Activated naive CD4-positive, alpha-beta T cell treated with anti-CD3 and anti-CD28 coated beads for 36 hours (primary cell): ENCODE measurements at regions of chr14 and their contacts with region 1.

Region 1: GRCh38 chr14:81170104-81170828 is 50.5 kb downstream of the GTF2A1 start:
- DNase-seq: peak; percentile 90
- H3K4me3 Mint-ChIP-seq: peak overlapping the region; percentile 85
- H3K27ac Mint-ChIP-seq: peak overlapping the region; percentile 93
- H3K4me1 Mint-ChIP-seq: peaks cover 12% of the 10 kb centered on the region
- H3K27me3 Mint-ChIP-seq: no peaks in the 10 kb centered on the region

Region 2: DNA sequence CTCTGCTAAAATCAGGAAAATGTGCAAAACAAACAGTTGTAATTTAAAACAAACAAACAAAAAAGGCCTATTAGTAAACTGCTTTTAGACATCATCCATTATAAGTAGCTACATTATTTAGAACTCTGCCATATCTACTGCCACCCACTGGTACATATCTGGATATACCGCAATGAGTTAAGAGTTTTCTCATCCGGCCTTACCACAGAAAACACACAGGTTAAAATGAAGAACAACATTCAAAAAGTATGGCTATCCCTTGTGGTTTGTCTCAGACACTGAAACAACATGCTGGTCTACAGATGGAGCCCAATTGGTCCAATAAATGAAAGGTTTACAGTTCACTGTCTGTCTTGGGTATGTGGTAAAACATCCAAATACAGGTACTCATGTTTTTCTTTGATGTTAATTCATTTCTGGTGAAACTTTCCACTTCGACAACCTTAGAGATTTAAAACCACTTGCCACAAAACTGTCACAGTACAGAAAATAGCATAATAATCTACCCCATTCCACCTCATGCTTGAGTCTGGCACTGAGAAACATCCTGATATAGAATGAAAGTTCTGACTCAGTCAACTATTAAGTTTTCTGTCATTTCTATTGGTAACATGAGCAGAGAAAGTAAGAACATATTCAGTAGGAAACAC is 583.1 kb before region 1 on chr14:
- CTCF ChIA-PET with region 1: no interaction called
- intact Hi-C with region 1: loop called (anchors 5 kb)
- DNase-seq: peak; percentile 9
- H3K4me3 Mint-ChIP-seq: no peak overlapping the region
- H3K27ac Mint-ChIP-seq: peak overlapping the region; percentile 39
- H3K4me1 Mint-ChIP-seq: peaks cover 14% of the 10 kb centered on the region
- H3K27me3 Mint-ChIP-seq: no peaks in the 10 kb centered on the region

Region 3: DNA sequence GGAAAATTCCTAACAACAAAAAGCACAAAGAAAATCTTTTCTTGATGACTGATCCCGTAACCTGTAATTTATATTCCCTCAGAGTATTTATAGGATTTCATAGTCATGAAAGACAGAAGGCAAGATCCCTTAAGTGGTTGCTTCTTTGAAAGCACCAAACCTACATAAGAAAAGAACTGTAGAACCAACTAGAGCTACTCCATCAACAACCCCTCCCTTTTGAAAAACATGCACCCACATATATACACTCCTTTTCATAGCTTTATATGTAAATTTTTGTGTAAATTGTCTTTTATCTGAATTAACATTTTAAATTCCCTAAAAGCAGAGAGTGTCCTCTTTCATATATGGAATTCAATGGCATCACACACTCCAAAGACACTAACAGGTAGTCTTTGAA is 444.1 kb before region 1 on chr14:
- CTCF ChIA-PET with region 1: no interaction called
- intact Hi-C with region 1: no loop called
- DNase-seq: no peak
- H3K4me3 Mint-ChIP-seq: no peak overlapping the region
- H3K27ac Mint-ChIP-seq: no peak overlapping the region
- H3K4me1 Mint-ChIP-seq: no peaks in the 10 kb centered on the region
- H3K27me3 Mint-ChIP-seq: no peaks in the 10 kb centered on the region

Region 4: GRCh38 chr14:80941241-80942182 is 228.8 kb before region 1 on chr14 and contains the start of gene CEP128:
- CTCF ChIA-PET with region 1: no interaction called
- intact Hi-C with region 1: loop called (anchors 1 kb)
- DNase-seq: peak; percentile 90
- H3K4me3 Mint-ChIP-seq: peak within 1 kb of the TSS; percentile 86
- H3K27ac Mint-ChIP-seq: peak within 1 kb of the TSS; percentile 88
- H3K4me1 Mint-ChIP-seq: peaks cover 38% of the 10 kb centered on the region
- H3K27me3 Mint-ChIP-seq: no peaks in the 10 kb centered on the region
- total RNA-seq, gene CEP128: 16.4 to 17.1 TPM

Region 5: DNA sequence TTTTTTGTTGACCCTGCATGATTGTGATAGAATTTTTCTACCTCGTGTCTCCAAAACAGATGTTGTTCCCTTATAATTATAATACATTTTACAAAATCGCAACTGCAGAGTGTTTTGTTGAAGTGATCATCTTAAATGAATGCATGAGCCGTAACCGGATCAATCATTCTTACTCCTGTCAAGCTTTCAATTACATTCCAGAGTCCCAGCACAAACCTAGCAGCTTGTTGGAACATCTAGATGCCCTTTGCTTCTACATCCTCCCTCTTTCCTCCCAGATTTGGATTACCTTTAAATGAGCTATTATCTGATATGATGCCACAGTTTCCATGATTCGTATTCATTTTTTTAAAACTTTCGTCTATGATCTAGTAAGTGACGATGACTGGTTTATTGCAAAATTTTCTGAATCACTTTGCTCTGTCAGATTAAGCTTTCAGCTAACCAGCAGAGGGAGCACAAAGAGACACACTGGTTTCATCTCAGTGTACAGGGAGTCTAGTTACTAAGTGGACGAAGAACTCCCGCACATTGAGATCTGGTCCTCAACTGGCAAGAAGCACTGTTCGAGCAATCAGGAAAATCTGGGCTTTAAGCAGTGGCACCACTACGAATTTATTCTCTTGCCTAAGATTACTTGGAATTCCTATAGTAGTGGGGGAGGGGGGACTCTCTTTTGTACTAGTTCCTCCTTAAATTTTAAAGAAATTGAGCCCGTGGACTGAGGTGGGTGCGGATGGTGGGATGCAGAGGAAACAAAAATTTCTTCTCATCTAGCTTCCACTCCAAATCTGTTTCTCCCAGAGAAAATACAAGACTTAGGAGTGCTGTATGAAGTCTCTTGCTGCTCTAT is 174.0 kb before region 1 on chr14:
- CTCF ChIA-PET with region 1: interaction called, 39 read pairs
- intact Hi-C with region 1: loop called (anchors 1 kb)
- DNase-seq: peak; percentile 38
- H3K4me3 Mint-ChIP-seq: no peak overlapping the region
- H3K27ac Mint-ChIP-seq: no peak overlapping the region
- H3K4me1 Mint-ChIP-seq: peaks cover 7% of the 10 kb centered on the region
- H3K27me3 Mint-ChIP-seq: peaks cover 14% of the 10 kb centered on the region

Region 6: GRCh38 chr14:81192594-81192993 is 22.3 kb after region 1 on chr14:
- CTCF ChIA-PET with region 1: interaction called, 7 read pairs
- intact Hi-C with region 1: loop called (anchors 1 kb)
- DNase-seq: peak; percentile 54
- H3K4me3 Mint-ChIP-seq: peak overlapping the region; percentile 59
- H3K27ac Mint-ChIP-seq: peak overlapping the region; percentile 87
- H3K4me1 Mint-ChIP-seq: peaks cover 51% of the 10 kb centered on the region
- H3K27me3 Mint-ChIP-seq: no peaks in the 10 kb centered on the region

Region 7: DNA sequence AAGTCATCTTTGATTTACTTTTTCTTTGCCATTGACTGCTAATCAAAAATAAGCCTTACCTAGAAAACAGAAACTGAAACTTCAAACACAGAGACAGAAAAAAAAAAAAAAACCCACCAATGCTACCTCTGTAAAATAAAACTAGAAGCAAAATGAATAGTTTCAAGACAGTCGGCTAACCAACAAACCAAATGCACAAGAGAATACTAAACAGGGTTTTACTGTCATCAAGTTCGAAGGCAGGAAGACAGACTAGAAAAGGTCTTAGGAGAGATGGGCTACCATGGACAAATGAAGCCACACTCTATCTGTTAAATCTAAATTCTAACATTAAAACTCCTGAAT is 303.9 kb after region 1 on chr14:
- CTCF ChIA-PET with region 1: no interaction called
- intact Hi-C with region 1: loop called (anchors 1 kb)
- DNase-seq: no peak
- H3K4me3 Mint-ChIP-seq: peak overlapping the region; percentile 55
- H3K27ac Mint-ChIP-seq: peak overlapping the region; percentile 92
- H3K4me1 Mint-ChIP-seq: peaks cover 60% of the 10 kb centered on the region
- H3K27me3 Mint-ChIP-seq: no peaks in the 10 kb centered on the region